Ovary (tissue), 10 donors: ENCODE measurements at regions of chr17 and their contacts with region 1.

Region 1: DNA sequence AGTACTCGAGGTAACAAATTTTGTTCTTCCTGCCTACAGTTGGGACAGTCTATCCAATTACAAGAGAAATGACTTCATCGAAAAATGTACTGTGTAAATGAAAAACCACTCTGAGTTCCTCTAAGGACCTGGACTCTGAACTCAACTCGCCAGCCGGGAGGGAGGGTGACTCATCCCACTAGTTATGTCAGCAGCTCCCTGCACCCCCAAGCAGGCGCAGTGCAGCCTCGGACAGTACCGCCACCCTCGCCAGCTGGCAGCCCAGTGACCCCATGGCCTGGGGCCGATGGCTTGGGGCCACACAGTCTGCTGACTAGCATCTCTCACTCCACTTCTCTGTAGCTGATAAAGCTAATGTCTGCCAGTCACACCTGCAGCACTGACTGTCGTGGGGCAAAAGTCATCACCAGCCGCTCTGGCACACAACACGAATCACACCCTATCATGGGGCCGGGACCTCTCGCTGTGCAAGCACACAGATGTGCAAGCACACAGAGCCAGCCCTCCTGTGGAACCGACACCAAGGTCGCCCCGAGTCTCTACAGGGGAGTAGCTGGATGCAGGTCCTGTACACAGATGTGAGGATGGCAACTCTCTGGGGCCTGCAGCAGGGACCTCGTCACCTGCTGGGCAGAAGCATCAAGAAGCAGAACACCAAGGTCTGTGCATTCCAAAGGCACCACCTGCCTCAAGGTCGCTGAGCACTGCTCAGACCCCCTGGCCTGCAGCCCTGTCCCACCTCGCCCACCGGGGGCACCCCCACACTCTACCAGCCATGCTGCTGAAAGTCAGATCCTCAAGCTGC is 5.7 kb downstream of the CSNK1D start:
- DNase-seq: peak; percentile 80 to 87 (median 81)
- H3K4me3 ChIP-seq: peak overlapping the region; percentile 22
- H3K27ac ChIP-seq: peak overlapping the region in 1 of 2 donors; percentile 60
- H3K4me1 ChIP-seq: peaks cover 19% of the 10 kb centered on the region
- H3K27me3 ChIP-seq: no peaks in the 10 kb centered on the region
- CTCF ChIP-seq: no peak
- EP300 ChIP-seq: no peak
- POLR2A ChIP-seq: no peak

Region 2: DNA sequence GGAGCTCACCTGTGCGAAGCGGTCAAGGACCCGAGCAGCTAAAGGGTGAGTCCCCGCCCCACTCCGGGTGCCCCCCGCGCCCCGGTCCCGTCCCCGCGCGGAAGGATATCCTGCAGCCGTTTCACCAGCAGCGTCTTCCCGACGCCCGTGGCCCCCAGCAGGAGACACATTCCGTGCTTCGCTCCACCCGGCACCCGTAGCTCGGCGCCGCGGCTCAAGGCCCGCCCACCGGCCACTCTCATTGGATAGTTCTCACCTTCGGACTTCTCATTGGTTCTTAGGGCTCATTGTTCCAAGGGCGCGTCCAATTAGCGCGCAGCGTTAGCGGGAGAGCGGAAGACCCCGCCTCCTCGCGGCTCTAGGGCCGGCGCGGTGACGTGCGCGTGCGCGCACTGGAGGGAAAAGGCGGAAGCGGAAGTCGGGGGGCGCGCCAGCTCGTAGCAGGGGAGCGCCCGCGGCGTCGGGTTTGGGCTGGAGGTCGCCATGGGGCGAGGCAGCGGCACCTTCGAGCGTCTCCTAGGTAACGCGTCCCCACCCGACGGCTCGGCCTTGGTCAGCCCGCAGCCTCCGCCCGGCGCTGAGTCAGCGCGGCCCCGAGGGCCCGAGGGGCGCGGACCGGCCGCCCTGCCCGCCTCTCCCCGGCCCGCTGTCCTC is 584.1 kb before region 1 on chr17 and contains the starts of genes ARL16 and HGS:
- intact Hi-C with region 1: no loop called
- DNase-seq: peak; percentile 97 to 99 (median 98)
- H3K4me3 ChIP-seq: peak within 1 kb of the TSS; percentile 100
- H3K27ac ChIP-seq: peak within 1 kb of the TSS; percentile 8 to 39
- H3K4me1 ChIP-seq: peaks cover 10% of the 10 kb centered on the region
- H3K27me3 ChIP-seq: no peaks in the 10 kb centered on the region
- CTCF ChIP-seq: no peak
- EP300 ChIP-seq: no peak
- POLR2A ChIP-seq: peak; percentile 45
- total RNA-seq, gene ARL16: 22.8 to 45.1 (median 31.1) TPM
- total RNA-seq, gene HGS: 39.1 to 91.5 (median 71.7) TPM

Region 3: DNA sequence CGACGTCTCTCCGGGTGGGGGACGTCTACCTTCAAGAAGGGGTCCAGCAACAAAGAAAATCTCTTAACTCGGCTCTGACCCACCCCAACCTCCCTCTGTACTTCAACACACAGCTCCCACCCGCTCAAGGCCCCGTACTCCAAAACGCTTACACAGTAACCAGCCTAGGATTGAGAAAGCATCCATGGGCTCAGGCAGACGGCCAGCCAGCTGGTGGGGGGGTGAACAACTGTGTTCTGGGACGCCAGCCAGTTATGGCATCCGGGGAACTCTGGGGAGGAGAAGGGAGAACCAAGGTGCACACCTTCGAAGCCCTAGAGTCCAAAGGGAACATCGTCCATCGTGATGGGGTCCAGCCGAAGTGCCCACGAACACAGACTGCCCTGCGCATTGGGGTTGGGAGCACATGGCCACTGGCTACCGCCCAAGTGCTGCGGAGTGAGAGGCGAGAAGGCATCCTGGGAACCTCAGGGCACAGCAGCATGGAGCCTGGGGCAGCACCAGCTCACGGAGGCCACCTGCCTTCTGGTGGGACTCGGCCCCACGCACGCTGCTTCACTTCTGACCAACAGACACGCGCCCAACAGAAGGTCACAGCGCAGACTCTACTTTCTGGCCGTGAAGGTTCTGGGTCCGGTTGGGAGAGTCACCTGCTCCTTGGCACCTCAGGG is 24.7 kb before region 1 on chr17:
- intact Hi-C with region 1: loop called in 1 of 4 experiments (anchors 2 kb)
- DNase-seq: peak; percentile 90 to 96 (median 94)
- H3K4me3 ChIP-seq: no peak overlapping the region
- H3K27ac ChIP-seq: peak overlapping the region in 1 of 2 donors; percentile 67
- H3K4me1 ChIP-seq: peaks cover 56% of the 10 kb centered on the region
- H3K27me3 ChIP-seq: no peaks in the 10 kb centered on the region
- CTCF ChIP-seq: no peak
- EP300 ChIP-seq: no peak
- POLR2A ChIP-seq: peak; percentile 12